ENCODE measurements at regions of chr5 and their contacts with region 1.

Region 1: DNA sequence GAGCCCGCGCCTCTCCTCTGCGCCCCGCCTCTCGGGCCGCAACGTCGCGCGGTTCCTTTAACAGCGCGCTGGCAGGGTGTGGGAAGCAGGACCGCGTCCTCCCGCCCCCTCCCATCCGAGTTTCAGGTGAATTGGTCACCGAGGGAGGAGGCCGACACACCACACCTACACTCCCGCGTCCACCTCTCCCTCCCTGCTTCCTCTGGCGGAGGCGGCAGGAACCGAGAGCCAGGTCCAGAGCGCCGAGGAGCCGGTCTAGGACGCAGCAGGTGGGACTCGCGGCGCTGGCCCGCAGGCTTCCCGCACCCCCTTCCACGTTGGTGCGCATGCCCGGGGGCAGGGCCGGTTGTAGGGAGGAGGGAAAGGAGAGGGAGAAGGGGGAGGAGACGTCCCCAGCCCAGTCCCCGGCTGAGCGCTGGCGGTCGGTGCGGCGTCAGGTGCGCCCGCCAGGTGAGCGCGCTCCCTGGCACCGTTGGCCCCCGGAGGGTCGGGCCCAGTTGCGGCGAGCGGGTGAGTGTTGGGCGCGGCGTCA is at the start of gene OCLN:
- DNase-seq: peak; percentile 89
- H3K4me3 ChIP-seq: peak within 1 kb of the TSS; percentile 73 to 92 (median 75)
- H3K27ac ChIP-seq: peak within 1 kb of the TSS; percentile 52
- H3K4me1 ChIP-seq: peaks cover 12% of the 10 kb centered on the region
- H3K27me3 ChIP-seq: no peaks in the 10 kb centered on the region
- CTCF ChIP-seq: no peak
- total RNA-seq, gene OCLN: 12.0 to 21.6 TPM

Region 2: GRCh38 chr5:69414885-69415583 is 77.4 kb before region 1 on chr5 and contains the start of gene MARVELD2:
- CTCF ChIA-PET with region 1: no interaction called
- dilution Hi-C with region 1: no loop called
- in situ Hi-C with region 1: loop called in 1 of 2 experiments (anchors 10 kb)
- intact Hi-C with region 1: loop called (anchors 1 kb)
- DNase-seq: peak; percentile 93
- H3K4me3 ChIP-seq: peak within 1 kb of the TSS; percentile 68 to 86 (median 77)
- H3K27ac ChIP-seq: peak within 1 kb of the TSS; percentile 95
- H3K4me1 ChIP-seq: peaks cover 12% of the 10 kb centered on the region
- H3K27me3 ChIP-seq: no peaks in the 10 kb centered on the region
- CTCF ChIP-seq: peak in 1 of 2 donors; percentile 74
- total RNA-seq, gene MARVELD2: 35.3 to 52.0 TPM

Region 3: GRCh38 chr5:69528048-69528447 is 35.6 kb after region 1 on chr5:
- CTCF ChIA-PET with region 1: no interaction called
- dilution Hi-C with region 1: no loop called
- in situ Hi-C with region 1: no loop called
- intact Hi-C with region 1: no loop called
- DNase-seq: peak; percentile 43
- H3K4me3 ChIP-seq: no peak overlapping the region
- H3K27ac ChIP-seq: no peak overlapping the region
- H3K4me1 ChIP-seq: no peaks in the 10 kb centered on the region
- H3K27me3 ChIP-seq: no peaks in the 10 kb centered on the region
- CTCF ChIP-seq: no peak